Colonic mucosa (tissue), 4 donors: ENCODE measurements at regions of chr16 and their contacts with region 1.

Region 1: GRCh38 chr16:84970447-84971127 is 40.7 kb downstream of the ZDHHC7 start:
- DNase-seq: peak; percentile 81
- H3K4me3 ChIP-seq: no peak overlapping the region
- H3K27ac ChIP-seq: no peak overlapping the region
- H3K4me1 ChIP-seq: no peaks in the 10 kb centered on the region
- H3K27me3 ChIP-seq: no peaks in the 10 kb centered on the region
- CTCF ChIP-seq: peak; percentile 87

Region 2: GRCh38 chr16:83870830-83871229 is 1099.8 kb before region 1 on chr16:
- intact Hi-C with region 1: no loop called
- DNase-seq: no peak
- H3K4me3 ChIP-seq: no peak overlapping the region
- H3K27ac ChIP-seq: no peak overlapping the region
- H3K4me1 ChIP-seq: no peaks in the 10 kb centered on the region
- H3K27me3 ChIP-seq: no peaks in the 10 kb centered on the region
- CTCF ChIP-seq: no peak

Region 3: DNA sequence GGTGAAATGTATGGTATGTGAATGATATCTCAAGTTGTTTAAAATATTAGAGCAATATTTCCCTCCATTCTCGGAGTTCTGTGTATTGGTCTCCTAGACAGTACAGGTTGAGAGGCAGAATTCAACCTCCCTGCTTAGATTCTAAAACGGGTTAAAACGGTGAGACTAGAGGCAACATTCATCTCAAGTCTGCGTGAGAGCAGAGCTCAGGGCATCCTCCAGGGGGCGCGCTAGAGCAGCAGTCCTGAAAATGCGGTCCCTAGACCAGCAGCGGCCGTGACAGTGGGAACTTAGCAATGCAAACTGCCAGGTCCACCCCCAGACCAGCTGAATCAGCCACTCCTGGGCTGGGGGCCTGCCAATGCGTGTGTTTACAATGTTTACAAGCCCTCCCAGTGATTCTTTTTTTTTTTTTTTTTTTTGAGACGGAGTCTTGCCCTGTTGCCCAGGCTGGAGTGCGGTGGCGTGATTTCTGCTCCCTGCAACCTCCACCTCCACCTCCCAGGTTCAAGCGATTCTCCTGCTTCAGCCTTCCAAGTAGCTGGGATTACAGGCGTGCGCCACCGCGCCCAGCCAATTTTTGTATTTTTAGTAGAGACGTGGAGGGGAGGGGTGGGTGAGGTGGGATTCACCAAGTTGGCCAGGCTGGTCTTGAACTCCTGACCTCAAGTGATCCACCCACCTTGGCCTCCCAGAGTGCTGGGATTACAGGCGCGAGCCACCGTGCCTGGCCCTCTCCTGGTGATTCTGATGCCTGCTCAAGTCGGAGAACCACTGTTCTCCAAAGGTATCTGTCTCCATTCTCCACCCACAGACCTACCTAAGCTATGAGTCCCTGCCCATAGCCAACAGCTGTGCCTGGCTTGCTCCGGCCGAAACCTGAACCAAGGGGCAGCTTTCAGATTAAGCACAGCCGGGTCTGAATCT is 298.0 kb before region 1 on chr16:
- intact Hi-C with region 1: loop called (anchors 5 kb)
- DNase-seq: peak; percentile 82
- H3K4me3 ChIP-seq: no peak overlapping the region
- H3K27ac ChIP-seq: no peak overlapping the region
- H3K4me1 ChIP-seq: no peaks in the 10 kb centered on the region
- H3K27me3 ChIP-seq: no peaks in the 10 kb centered on the region
- CTCF ChIP-seq: peak; percentile 92

Region 4: DNA sequence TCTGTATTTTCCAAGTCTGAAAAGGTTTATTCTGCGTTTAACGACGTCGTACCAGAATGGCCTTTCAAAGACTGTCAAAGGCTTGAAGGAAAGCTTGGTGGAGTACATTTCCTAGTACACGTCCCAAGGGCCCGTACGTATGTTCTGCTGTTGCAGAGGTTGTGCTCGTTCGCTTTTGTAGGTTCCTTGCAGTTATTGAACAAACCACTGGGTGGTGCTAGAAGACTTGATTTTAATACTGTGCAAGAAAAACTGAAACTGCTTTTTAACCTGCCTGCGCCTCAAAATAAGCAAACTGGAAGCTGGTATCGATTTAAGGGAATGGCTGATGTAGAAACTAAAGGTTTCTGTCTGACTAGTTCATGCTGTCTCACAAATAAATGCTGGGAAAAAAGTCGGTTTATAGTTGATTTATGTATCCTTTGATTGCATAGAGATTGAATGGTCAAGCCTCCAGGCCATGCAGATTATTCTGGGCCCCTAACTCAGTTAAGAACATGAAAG is 216.2 kb before region 1 on chr16:
- intact Hi-C with region 1: loop called (anchors 5 kb)
- DNase-seq: peak; percentile 84
- H3K4me3 ChIP-seq: no peak overlapping the region
- H3K27ac ChIP-seq: peak overlapping the region; percentile 23
- H3K4me1 ChIP-seq: peaks cover 7% of the 10 kb centered on the region
- H3K27me3 ChIP-seq: no peaks in the 10 kb centered on the region
- CTCF ChIP-seq: peak; percentile 62

Region 5: DNA sequence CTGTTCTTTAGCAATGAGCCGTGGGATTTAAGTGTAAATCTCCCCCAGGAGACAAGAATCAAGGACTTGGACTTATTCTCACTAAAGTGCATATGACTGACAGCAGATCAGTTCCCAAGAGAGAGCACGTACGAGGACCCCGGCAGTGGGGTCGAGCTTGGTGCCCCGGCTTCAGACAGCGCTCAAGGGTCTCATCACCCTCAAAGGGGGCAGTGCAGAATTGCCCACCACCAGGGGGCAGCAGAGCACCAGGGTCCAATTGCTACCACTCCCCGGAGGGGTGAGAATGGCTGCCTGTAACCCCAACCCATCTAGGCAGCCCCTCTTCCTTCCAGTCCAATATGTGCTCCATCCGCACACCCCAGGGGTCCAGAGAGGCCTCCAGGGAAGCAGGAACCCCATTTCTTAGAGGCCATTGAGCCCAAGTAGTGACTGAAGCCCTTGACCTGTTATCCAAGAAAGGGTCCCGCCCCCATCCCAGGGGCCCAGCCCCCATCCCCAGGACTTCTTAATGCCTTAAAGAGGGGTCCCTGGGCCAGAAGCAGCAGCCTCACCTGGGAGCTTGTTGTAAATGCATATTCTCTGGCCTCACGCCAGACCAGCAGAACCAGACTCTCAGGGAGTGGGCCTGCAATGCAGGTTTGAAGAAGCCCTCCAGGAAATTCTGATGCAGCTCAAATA is 45.4 kb before region 1 on chr16:
- intact Hi-C with region 1: loop called (anchors 5 kb)
- DNase-seq: peak; percentile 78
- H3K4me3 ChIP-seq: no peak overlapping the region
- H3K27ac ChIP-seq: no peak overlapping the region
- H3K4me1 ChIP-seq: peaks cover 7% of the 10 kb centered on the region
- H3K27me3 ChIP-seq: no peaks in the 10 kb centered on the region
- CTCF ChIP-seq: peak; percentile 93